BJ (cell line): ENCODE measurements at regions of chr15 and their contacts with region 1.

Region 1: DNA sequence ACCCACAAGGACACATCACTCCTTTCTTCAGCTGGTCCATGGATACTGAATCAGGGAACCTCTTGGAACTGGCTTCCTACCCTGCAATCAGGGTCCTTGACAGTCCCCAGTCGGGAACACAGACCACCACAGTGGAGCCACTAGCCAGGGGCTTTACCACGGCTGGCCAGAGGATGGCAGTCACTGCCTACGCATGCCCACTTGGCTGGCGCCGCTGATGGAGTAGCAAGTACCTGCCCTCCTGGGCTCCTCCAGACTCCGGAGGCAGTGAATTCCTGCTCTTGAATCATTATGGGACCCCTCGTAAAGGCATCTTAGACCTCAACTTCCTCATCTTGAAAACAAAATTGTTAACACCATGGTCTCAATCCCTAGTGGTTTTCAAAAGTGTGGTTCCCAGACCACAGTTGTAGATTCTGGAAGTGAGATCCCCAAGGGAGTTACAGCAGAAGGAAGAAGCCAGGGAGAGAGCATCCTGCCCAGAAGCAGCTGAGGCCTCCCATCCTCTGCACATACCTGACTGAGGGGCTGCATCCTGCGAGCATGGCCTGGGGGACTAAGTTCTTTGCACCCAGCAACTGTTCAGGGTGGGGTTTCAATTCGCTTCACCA is 9.1 kb upstream of the SKIC8 start:
- DNase-seq: no peak
- H3K4me3 ChIP-seq: no peak overlapping the region
- H3K27me3 ChIP-seq: peaks cover 3% of the 10 kb centered on the region; the same call in 1 of the 2 replicates
- CTCF ChIP-seq: peak; percentile 97

Region 2: GRCh38 chr15:78087951-78088772 is 220.4 kb before region 1 on chr15:
- CTCF ChIA-PET with region 1: no interaction called
- POLR2A ChIA-PET with region 1: no interaction called
- DNase-seq: no peak
- H3K4me3 ChIP-seq: no peak overlapping the region
- H3K27me3 ChIP-seq: peaks cover 5% of the 10 kb centered on the region
- CTCF ChIP-seq: no peak

Region 3: DNA sequence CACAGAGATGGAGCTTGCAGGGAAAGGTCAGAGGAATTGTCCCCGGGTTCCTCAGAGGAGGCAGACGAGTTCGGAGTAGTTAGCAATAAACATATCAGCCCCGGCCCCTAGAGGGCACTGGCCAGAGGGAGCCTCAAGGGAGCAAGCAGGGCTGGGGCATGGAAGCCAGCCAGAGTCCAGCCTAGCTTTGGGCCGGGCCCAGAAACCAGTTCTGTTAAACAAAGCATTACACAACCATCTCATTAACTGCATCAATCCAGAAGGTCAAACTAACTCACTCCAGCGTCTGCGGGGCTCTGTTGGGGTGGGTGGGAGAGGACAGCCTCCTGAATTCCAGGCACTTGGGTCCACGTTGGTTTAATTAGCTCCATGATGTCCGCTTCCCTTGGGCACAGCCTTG is 88.4 kb after region 1 on chr15:
- CTCF ChIA-PET with region 1: interaction called, 57 read pairs
- POLR2A ChIA-PET with region 1: no interaction called
- DNase-seq: no peak
- H3K4me3 ChIP-seq: no peak overlapping the region
- H3K27me3 ChIP-seq: no peaks in the 10 kb centered on the region; the same call in 1 of the 2 replicates
- CTCF ChIP-seq: peak; percentile 76

Region 4: DNA sequence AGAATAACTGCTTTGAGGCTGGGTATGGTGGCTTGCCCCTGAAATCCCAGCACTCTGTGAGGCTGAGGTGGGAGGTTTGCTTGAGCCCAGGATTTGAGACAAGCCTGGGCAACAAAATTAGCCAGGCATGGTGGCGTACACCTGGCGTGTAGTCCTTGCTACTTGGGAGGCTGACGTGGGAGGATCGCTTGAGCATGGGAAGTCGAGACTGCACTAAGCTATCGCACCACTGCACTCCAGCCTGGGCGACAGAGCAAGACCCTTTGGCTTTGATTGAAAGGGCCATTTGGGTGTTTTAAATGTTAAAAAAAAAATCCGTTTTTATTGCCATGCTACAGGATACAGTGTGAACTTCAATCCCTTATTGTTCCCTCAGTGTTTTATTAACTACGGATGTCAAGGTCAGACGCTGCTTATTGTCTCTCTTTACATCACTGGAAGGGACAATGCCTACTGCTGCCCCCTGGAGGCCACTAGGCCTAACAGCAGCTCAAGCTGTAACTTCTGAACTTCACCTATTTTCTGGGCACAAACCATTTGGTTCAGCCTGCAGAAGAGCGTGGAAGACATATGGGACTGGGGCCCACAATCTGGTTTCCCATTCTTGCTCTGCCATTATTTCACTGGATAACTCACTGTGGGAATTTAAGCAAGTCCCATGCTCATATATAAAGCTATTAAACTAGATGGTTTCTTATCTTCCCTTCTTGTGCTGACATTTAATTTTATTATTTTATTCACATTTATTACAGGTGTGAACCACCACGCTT is 114.2 kb after region 1 on chr15:
- CTCF ChIA-PET with region 1: interaction called, 578 read pairs
- POLR2A ChIA-PET with region 1: no interaction called
- DNase-seq: no peak
- H3K4me3 ChIP-seq: no peak overlapping the region
- H3K27me3 ChIP-seq: peaks cover 6% of the 10 kb centered on the region
- CTCF ChIP-seq: peak; percentile 96

Region 5: GRCh38 chr15:78427953-78428352 is 119.4 kb after region 1 on chr15:
- CTCF ChIA-PET with region 1: interaction called, 578 read pairs
- POLR2A ChIA-PET with region 1: no interaction called
- DNase-seq: no peak
- H3K4me3 ChIP-seq: no peak overlapping the region
- H3K27me3 ChIP-seq: peaks cover 14% of the 10 kb centered on the region
- CTCF ChIP-seq: no peak

Region 6: DNA sequence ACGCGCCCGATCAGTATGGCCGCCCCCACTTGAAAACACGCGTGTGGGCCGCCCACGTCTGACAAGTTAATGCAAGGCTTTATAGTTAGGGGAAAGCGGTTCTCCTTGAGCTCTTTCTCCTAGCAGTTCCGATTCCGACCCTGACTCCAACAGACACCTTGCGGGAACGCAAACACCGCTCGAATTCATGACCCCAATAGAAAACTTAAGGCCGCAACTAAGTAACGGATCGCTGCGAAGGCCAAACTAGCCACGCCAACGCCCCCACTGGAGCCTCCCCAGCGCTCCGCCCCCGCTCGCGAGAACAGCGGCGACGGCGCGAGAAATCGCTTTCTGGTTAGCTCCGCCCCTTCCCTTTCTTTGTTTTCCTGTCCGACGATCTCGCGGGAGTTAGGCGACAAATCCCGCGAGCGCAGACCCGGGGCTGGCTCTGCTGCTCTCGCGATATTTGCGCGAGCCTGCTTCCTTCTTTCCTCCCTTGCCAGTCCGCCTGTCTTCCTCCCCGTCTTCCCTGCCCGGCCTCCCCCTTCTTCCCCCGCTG is 129.3 kb after region 1 on chr15 and contains the start of gene IREB2:
- CTCF ChIA-PET with region 1: interaction called, 27 read pairs
- POLR2A ChIA-PET with region 1: no interaction called
- DNase-seq: peak; percentile 92
- H3K4me3 ChIP-seq: peak within 1 kb of the TSS; percentile 88
- H3K27me3 ChIP-seq: 0 out of 2 replicates have a peak, but pooled peaks cover 1% of the 10 kb centered on the region
- CTCF ChIP-seq: no peak
- polyA plus RNA-seq, gene IREB2: 11.1 and 21.7 TPM in 2 replicates

Region 7: DNA sequence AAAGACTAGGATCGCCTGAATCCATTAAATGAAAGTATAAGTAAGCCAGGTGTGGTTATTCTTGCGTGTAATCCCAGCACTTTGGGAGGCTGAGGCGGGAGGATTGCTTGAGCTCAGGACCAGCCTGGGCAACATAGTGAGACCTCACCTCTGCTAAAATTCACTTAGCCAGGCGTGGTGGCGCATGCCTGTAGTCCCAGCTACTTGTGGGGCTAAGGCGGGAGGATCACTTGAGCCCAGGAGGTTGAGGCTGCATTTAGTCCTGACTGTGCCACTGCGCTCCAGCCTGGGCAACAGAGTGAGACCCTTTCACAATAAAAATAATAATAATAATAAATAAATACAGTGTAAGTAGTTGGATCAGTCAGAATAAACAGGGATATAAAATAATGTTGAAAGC is 173.4 kb after region 1 on chr15:
- CTCF ChIA-PET with region 1: interaction called, 11 read pairs
- POLR2A ChIA-PET with region 1: no interaction called
- DNase-seq: no peak
- H3K4me3 ChIP-seq: no peak overlapping the region
- H3K27me3 ChIP-seq: no peaks in the 10 kb centered on the region
- CTCF ChIP-seq: no peak

Region 8: DNA sequence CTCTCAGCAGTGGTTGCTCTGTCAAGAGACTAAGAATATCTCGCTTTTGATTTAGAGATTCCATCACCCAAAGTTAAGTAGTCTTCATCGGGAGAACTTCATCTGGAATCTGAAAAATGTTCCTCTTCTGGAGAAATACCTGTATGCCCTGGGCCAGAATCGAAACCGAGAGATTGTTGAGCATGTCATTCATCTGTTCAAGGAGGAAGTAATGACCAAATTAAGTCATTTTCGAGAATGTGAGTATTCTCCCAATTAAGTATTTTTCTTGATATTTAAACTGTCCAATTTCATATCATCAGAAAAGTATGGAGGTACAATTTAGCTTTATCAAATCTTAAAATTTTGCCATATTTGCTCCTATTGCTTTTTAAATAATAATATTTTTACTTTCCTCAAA is 218.8 kb after region 1 on chr15:
- CTCF ChIA-PET with region 1: no interaction called
- POLR2A ChIA-PET with region 1: no interaction called
- DNase-seq: no peak
- H3K4me3 ChIP-seq: no peak overlapping the region
- H3K27me3 ChIP-seq: no peaks in the 10 kb centered on the region
- CTCF ChIP-seq: no peak